ENCODE measurements at regions of chr11 and their contacts with region 1.

Region 1: GRCh38 chr11:10792398-10792975 is 16.2 kb downstream of the EIF4G2 start:
- DNase-seq: no peak
- H3K4me3 ChIP-seq: no peak overlapping the region; the same call in 1 of the 2 replicates
- CTCF ChIP-seq: peak; percentile 99

Region 2: GRCh38 chr11:10750838-10751580 is 41.5 kb before region 1 on chr11 and contains the start of gene CTR9:
- CTCF ChIA-PET with region 1: no interaction called
- POLR2A ChIA-PET with region 1: no interaction called
- DNase-seq: peak; percentile 49
- H3K4me3 ChIP-seq: peak within 1 kb of the TSS; percentile 68
- CTCF ChIP-seq: peak; percentile 48

Region 3: GRCh38 chr11:10770626-10771254 is 21.7 kb before region 1 on chr11:
- CTCF ChIA-PET with region 1: interaction called, 20 read pairs
- POLR2A ChIA-PET with region 1: no interaction called
- DNase-seq: no peak
- H3K4me3 ChIP-seq: no peak overlapping the region
- CTCF ChIP-seq: peak; percentile 70

Region 4: DNA sequence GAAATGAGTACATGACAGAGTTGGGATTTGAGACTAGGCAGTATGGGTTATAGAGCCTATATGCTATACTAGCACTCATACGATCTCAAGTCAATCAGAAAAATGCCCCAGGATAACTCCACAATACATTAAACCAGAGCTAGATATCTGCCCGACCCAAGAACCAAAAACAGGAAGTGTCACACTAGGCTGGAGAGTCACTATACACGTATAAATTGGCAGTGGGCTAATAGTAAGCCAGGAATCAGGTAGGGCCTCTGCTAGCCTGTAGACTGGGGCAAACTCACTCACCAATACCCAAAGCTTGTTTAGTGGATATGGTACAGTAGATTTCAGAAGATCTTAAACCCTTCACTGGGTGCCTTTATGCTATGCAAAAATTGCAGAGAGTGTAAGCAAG is 32.4 kb after region 1 on chr11:
- CTCF ChIA-PET with region 1: no interaction called
- POLR2A ChIA-PET with region 1: no interaction called
- DNase-seq: no peak
- H3K4me3 ChIP-seq: no peak overlapping the region
- CTCF ChIP-seq: no peak

Region 5: GRCh38 chr11:10878408-10879214 is 86.1 kb after region 1 on chr11:
- CTCF ChIA-PET with region 1: interaction called, 16 read pairs
- POLR2A ChIA-PET with region 1: no interaction called
- DNase-seq: no peak
- H3K4me3 ChIP-seq: no peak overlapping the region
- CTCF ChIP-seq: peak; percentile 61

Region 6: GRCh38 chr11:10933455-10934292 is 141.2 kb after region 1 on chr11:
- CTCF ChIA-PET with region 1: interaction called, 20 read pairs
- POLR2A ChIA-PET with region 1: interaction called, 4 read pairs
- DNase-seq: peak; percentile 73
- H3K4me3 ChIP-seq: peak overlapping the region; percentile 58
- CTCF ChIP-seq: peak; percentile 90

Region 7: DNA sequence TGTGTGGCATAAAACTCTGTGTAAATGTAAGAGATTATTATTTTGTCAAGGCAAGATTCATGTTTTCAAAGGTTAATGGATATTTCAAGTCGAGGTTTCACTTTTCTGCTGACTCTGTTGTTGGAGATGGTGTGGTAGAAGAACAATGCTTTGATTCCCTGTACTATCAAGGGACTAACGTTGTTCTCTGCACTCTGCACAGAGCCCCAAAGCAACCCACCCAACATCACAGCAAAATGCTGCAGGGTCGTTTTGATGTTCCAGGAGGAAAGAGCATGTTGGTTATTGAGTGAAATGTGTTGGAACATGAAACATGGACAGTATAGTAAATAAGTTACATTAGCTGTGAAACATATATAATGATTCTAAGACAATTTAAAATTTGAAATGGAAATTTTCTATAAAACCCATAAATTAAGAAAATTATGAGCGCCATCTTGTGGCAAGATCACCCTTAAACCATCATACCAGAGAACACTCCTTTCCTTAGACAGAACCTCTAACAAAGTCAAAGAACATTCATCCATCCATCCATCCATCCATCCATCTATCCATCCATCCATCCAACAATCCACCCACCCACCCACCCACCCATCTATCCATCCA is 229.7 kb after region 1 on chr11:
- CTCF ChIA-PET with region 1: interaction called, 74 read pairs
- POLR2A ChIA-PET with region 1: interaction called, 5 read pairs
- DNase-seq: no peak
- H3K4me3 ChIP-seq: no peak overlapping the region
- CTCF ChIP-seq: no peak

Region 8: DNA sequence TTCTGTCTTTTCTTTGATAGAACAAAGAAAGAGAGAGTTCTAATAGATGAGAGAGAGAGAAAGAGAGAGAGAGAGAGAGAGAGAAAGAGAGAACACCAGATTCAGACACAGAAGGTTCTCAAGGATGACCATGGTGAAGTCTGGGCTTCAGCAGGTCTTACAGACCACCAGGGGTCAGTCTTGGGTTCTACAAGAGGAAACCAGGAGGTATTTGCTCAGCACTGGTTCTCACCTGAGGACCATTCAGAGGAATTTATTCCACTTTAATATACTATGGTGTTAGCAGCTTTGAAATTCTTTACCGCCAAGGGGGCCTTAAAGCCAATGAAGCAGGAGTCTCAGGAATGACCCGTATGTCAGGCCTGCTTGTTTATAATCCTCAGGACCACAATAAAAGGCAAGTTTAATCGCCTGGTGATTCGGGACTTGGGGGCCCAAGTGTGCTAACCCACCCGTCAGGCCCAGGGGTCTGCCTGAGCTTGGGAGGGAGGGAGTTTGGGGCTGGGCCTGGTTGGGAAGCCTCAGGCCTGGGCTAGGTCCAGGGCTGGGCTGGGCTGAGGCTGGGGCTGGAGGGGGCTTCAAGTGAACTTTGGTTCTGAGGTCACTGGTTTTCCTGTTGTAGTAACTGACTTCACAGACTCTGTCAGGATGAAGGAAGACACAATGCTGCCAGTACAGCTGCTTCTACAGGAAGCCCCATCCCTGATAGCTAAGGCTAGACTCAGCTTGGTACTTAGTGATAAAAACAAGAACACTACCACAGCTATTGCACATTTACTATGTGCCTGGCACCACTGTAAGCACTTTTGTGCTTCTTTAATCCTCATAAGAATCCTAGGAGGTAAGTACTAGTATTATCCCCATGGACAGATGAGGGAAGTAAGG is 244.6 kb after region 1 on chr11:
- CTCF ChIA-PET with region 1: interaction called, 10 read pairs
- POLR2A ChIA-PET with region 1: no interaction called
- DNase-seq: no peak
- H3K4me3 ChIP-seq: no peak overlapping the region
- CTCF ChIP-seq: peak; percentile 58